ENCODE measurements at regions of chr13 and their contacts with region 1.

Region 1: DNA sequence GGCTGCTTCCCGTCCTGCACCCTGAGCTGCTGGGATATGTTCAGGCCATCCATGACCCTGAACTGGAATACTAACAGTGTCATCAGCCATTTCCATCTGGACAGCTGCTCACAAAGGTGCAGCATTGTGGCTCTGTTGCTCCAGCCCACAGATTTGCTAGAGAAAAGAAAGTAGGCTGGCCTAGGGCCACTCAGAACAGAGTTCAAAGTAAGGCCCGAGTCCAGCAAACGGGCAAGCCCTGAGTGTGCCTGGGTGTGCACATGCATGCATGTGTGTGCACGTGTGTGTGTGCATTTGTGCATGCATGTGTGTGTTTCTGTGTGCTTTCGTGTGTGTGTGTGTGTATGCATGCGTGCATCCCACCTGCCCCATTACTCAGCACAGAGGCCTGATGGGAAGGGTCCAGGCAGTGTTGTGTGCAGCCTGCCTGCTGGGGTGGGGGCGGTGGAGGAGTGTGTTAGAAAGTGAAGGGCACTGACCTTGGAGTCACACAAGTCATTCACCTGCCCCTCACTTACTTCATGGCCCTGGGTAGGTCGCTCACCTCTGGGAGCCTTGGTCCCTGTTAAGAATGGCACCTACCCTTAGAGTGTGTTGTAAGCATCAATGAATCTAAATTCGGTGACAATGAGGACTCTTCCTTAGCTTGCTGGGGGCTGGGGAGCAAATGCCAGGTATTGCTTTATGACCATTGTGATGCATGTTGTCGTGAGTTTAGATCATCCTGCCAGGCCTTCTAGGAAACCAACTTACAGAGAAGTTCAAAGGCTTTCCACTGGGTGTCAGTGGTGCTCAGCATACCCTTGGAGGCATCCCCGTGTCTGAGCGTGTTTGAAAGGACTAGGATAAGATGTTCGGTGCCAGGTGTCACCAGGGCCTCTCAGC is 53.2 kb downstream of the GPR12 start:
- DNase-seq: peak; percentile 58
- H3K4me3 ChIP-seq: no peak overlapping the region
- H3K27ac ChIP-seq: no peak overlapping the region
- H3K4me1 ChIP-seq: no peaks in the 10 kb centered on the region
- H3K27me3 ChIP-seq: no peaks in the 10 kb centered on the region
- CTCF ChIP-seq: peak; percentile 61

Region 2: DNA sequence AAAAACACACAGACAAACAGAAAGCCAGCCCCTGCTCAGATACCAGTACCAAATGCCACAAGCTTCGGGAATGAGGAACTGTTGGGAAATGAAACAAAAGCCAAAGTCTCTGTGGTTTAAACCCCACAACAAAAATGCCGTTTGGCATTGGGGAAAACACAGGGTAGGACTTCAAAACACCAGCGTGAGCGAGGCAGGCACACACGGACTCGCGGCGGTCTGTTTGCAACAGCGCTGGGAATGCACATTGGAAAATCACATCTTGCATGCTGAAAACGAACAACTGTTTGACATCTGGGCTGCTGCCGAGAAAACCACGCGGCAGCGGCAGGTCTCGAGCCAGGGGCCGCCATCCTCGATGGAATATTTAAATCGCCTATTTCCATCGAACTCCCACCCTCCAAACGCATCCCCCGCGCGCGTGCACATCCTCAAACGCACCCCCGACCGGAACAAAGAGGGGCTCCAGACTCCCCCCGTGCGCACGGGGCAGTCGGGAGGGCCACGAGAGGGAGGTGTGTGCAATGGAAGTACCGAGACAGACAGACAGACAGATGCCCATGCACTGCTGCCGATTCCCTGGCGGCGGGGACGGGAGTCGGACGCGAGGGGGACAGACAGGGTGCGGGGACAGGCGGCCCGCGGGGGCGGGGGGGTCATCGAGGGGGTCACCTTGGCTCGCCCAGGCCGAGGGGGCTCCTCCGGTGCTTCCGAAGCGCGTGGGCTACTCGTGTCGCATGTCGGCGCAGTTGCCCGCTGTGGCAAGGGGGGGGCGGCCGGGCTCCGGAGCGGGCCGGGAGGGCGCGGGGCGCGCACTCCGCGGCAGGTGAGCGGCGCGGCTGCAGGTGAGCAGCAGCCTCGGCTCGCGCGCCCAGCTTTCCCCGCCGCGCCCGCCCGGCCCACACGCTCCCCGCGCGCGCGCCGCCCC is 52.8 kb after region 1 on chr13 and contains the start of gene GPR12:
- CTCF ChIA-PET with region 1: no interaction called
- POLR2A ChIA-PET with region 1: no interaction called
- intact Hi-C with region 1: no loop called
- DNase-seq: peak; percentile 10
- H3K4me3 ChIP-seq: no peak within 1 kb of the TSS
- H3K27ac ChIP-seq: no peak within 1 kb of the TSS
- H3K4me1 ChIP-seq: no peaks in the 10 kb centered on the region
- H3K27me3 ChIP-seq: peaks cover 94% of the 10 kb centered on the region
- CTCF ChIP-seq: no peak
- total RNA-seq, gene GPR12: not detected in 2 replicates

Region 3: GRCh38 chr13:26872525-26873385 is 165.4 kb after region 1 on chr13:
- CTCF ChIA-PET with region 1: no interaction called
- POLR2A ChIA-PET with region 1: no interaction called
- intact Hi-C with region 1: loop called (anchors 1 kb)
- DNase-seq: peak; percentile 58
- H3K4me3 ChIP-seq: no peak overlapping the region
- H3K27ac ChIP-seq: no peak overlapping the region
- H3K4me1 ChIP-seq: no peaks in the 10 kb centered on the region
- H3K27me3 ChIP-seq: peaks cover 17% of the 10 kb centered on the region
- CTCF ChIP-seq: peak; percentile 92

Region 4: GRCh38 chr13:27270594-27271520 is 563.5 kb after region 1 on chr13 and contains the start of gene RASL11A:
- CTCF ChIA-PET with region 1: no interaction called
- POLR2A ChIA-PET with region 1: no interaction called
- intact Hi-C with region 1: no loop called
- DNase-seq: peak; percentile 77
- H3K4me3 ChIP-seq: peak within 1 kb of the TSS; percentile 89
- H3K27ac ChIP-seq: no peak within 1 kb of the TSS
- H3K4me1 ChIP-seq: peaks cover 4% of the 10 kb centered on the region
- H3K27me3 ChIP-seq: no peaks in the 10 kb centered on the region
- CTCF ChIP-seq: peak; percentile 78
- total RNA-seq, gene RASL11A: 0.85 and 1.1 TPM in 2 replicates

Measured in A673 (cell line).